AG04450 (cell line): ENCODE measurements at regions of chr3 and their contacts with region 1.

Region 1: GRCh38 chr3:185561374-185561943 is 9.1 kb upstream of the LIPH start:
- DNase-seq: no peak
- H3K4me3 ChIP-seq: no peak overlapping the region
- H3K27ac ChIP-seq: no peak overlapping the region
- H3K27me3 ChIP-seq: peaks cover 14% of the 10 kb centered on the region
- CTCF ChIP-seq: no peak

Region 2: DNA sequence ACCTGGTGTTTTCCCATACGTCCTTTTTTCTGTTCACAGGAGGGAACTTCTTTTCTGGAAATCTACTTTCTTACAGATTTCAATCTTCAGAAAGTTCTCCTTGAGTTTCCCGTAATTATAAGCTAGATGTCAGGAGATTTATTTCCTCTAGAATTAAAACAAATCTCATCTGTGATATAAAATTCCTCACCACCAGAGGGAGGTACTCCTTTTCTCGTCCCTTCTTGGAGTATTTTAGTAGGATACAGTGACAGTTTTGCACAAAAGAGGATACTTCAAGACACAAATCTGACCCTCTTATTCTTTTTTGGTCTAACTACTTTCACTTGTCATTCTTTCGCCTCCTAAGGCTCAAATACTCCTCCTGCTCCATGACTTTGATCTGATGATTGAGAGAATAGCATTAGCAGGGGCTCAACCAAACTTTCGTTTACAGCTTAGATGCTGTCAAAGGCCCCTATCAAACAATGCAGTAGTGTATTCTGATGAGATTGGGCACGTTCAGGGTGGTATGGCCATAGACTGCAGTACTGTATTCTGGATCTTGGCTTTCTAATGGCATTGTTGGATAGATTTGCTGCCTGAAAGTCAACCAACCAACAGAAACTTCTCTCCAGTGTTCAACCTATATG is 100.6 kb before region 1 on chr3:
- CTCF ChIA-PET with region 1: interaction called, 20 read pairs
- POLR2A ChIA-PET with region 1: no interaction called
- DNase-seq: no peak
- H3K4me3 ChIP-seq: no peak overlapping the region
- H3K27ac ChIP-seq: no peak overlapping the region
- H3K27me3 ChIP-seq: no peaks in the 10 kb centered on the region
- CTCF ChIP-seq: peak; percentile 49

Region 3: GRCh38 chr3:185527364-185527763 is 34.1 kb before region 1 on chr3:
- CTCF ChIA-PET with region 1: interaction called, 10 read pairs
- POLR2A ChIA-PET with region 1: no interaction called
- DNase-seq: no peak
- H3K4me3 ChIP-seq: no peak overlapping the region
- H3K27ac ChIP-seq: no peak overlapping the region
- H3K27me3 ChIP-seq: peaks cover 8% of the 10 kb centered on the region
- CTCF ChIP-seq: no peak

Region 4: DNA sequence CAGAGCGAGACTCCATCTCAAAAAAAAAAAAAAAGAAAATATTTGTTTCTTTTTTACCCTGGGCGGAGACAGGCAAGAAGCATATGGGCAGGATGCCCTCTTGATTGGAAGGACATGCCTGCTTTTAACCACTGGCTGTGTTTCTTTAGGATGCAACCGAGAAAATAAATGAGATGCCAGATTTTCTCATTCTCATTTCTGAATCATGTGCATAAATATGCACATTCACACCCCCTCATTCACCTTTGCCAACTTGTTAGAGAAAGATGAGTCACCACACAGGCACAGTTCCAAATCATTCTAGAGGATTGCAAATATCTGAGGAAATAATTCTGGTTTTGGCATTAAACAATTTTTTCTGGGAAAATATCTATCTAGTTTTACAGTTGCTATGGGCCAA is 12.3 kb before region 1 on chr3:
- CTCF ChIA-PET with region 1: interaction called, 12 read pairs
- POLR2A ChIA-PET with region 1: no interaction called
- DNase-seq: peak; percentile 88
- H3K4me3 ChIP-seq: no peak overlapping the region
- H3K27ac ChIP-seq: no peak overlapping the region
- H3K27me3 ChIP-seq: no peaks in the 10 kb centered on the region
- CTCF ChIP-seq: no peak

Region 5: DNA sequence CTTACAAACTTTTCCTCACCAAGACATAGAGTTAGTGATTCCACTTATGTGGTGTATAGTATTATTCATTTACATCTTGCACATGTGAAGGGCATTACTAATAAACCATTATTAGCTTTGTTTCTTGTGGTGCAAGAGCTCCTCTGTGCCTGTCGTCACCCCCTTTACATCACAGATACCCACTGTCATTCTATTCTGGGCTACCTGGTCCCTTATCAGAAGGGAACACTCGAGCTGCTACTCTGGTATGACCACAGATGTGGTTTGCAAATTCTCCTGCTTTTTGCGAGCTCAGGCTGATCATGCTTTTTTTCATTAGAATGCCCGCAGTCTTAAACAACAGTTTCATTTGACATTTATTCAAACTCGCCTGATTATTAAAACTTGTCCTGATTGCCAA is 10.7 kb after region 1 on chr3:
- CTCF ChIA-PET with region 1: interaction called, 51 read pairs
- POLR2A ChIA-PET with region 1: no interaction called
- DNase-seq: no peak
- H3K4me3 ChIP-seq: no peak overlapping the region
- H3K27ac ChIP-seq: peak overlapping the region; percentile 11
- H3K27me3 ChIP-seq: no peaks in the 10 kb centered on the region
- CTCF ChIP-seq: no peak

Region 6: DNA sequence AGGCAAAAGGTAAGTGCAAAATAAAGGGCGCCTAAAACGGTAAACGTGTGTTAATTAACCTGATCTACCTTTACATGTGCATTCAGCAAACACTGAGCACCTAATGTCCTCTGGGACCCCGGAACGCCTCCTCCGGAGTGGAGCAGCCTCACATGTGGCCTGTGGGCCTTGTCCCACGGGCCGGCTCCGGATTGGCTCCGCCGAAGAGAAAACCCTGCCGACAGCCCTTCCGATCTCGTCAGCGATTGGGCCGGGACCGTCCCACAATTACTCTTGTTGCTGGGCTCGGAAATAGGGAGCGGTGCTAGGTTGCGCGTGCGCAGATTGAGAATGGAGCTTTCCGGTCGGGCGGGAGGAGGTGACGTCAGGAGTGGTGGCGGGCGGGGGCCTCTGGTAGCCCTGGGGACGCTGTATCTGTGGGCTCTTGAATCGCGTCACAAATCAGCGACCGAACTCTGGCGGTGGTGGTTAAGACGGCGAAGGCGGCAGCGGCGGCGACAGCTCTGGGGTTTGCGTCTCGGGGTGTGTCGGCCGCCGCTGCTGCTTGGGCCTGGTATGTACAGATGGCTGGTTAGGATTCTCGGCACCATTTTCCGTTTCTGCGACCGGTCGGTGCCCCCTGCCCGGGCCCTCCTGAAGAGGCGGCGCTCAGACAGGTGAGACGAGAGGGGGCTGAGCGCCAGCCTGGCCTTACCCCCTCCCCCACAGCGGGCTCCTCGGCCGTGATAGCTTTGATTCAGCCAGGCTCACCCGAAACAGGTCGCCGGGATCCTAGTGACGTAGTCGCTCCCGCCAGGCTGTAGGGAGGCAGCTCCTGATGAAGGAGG is 24.6 kb after region 1 on chr3 and contains the start of gene SENP2:
- CTCF ChIA-PET with region 1: interaction called, 11 read pairs
- POLR2A ChIA-PET with region 1: interaction called, 5 read pairs
- DNase-seq: peak; percentile 97
- H3K4me3 ChIP-seq: peak within 1 kb of the TSS; percentile 91
- H3K27ac ChIP-seq: peak within 1 kb of the TSS; percentile 89
- H3K27me3 ChIP-seq: no peaks in the 10 kb centered on the region
- CTCF ChIP-seq: no peak
- polyA plus RNA-seq, gene SENP2: 18.2 and 28.1 TPM in 2 replicates

Region 7: DNA sequence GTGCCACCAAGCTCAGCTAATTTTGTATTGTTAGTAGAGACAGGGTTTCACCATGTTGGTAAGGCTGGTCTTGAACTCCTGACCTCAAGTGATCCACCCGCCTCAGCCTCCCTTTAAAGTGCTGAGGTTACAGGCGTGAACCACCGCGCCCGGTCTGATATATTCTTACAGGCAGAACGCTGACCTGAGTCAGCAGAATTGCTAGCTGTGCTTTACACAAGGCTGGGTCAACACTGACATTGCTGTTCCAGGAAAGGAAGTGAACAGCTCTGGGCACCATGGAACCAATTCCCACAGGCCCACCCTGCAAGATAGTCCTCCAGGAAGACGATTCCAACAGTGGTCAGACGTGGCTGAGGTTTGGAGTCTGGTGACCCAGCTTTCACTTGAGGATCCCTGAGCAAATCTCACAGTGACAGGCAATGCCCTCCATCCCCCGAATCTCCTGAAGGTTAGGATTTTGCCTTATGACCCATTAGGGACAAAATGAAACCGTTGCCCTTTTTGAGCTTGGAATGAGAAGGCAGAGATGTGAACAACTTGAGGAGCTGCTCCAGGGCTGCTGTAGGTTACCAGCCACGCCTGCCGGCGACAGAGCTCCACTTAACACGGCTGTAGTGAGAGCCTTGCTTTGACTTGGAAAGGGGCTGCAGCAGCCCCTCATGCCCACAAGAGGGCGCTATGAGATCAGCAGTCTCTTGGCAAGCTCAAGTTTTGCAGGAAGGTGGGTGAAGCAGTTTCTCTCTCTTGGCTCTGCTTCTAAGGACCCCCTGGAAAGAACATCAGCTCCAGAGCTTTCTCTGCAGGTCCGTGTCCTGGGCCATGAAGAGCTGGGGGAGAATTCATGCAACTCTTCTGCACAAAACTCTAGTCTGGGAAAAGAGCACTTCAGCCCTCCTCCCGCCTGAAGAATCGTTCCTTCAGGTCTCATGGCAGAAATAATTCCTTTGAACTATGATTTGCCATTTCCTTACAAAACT is 98.8 kb after region 1 on chr3:
- CTCF ChIA-PET with region 1: no interaction called
- POLR2A ChIA-PET with region 1: no interaction called
- DNase-seq: peak; percentile 64
- H3K4me3 ChIP-seq: no peak overlapping the region
- H3K27ac ChIP-seq: peak overlapping the region; percentile 47
- H3K27me3 ChIP-seq: no peaks in the 10 kb centered on the region
- CTCF ChIP-seq: peak; percentile 99